ENCODE measurements at regions of chr20 and their contacts with region 1.

Region 1: DNA sequence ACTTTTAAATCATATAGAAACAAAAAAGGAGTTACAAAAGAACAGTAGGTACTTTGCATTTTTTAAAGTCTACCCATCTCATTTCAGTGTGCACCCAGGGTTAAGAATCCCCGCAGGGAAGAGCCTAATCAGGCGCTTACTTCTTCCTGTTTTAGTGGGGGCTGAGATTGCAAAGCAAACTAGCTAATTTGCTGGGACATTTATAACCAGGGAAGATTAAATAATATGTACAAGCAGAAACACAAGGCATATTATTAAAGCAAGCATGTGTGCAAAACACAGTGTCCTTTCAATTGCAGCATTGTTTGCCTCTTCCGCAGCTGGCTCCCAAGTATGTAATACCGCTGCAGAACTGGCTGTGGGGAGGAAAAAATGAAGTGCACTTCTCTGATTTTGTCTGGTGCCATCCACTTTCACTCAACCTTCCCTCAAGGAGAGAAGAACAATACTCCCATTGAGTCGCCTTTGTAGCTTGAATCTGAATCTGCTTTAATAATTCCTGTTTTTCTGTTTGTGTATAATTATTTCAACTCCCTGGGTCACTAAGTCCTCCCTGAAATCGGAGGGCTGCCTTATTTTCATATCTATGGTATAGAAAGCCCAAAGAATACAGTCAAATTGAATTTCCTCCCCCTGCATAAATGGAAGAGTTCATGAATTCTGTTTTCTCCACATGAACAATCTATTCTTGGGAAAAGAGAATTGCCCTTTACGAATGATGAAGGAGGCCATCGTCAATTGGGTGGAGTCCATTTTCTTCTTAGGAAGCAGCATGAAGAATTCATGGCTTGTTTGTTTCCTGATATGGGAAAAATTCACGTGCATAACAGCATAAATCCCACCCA is 23.3 kb upstream of the BCAS1 start:
- DNase-seq: no peak
- H3K4me3 ChIP-seq: no peak overlapping the region
- H3K27ac ChIP-seq: no peak overlapping the region
- H3K4me1 ChIP-seq: no peaks in the 10 kb centered on the region
- H3K27me3 ChIP-seq: no peaks in the 10 kb centered on the region
- CTCF ChIP-seq: no peak
- POLR2A ChIP-seq: no peak

Region 2: DNA sequence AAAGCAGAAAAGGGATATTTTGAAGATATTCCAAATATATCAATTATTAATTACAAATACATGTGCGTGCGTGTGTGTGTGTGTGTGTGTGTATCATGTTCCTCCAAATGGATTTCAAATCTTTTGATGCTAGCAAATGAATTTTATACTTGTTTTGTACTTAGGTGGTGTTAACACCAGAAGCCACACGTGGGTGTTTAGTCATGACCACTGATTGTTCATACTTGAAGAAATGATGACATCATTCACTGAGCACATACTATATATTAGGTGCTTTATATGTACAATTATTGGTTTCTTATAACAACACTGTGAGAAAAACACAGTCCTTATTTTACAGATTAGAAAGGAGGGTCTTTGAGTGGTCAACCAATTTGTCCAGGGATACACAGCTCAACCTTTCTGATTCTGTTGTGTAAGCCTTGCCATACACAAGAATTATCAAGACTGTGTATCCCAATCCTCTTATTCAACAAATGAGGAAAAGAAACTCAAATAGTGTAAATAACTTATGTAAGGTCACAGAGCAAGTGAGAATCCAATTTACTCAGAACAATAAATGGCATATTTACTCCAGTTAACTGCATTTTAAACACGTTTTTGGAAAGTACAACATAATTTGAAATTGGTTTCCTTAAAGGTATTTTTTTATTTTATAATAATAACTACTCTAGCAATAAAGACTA is 111.8 kb before region 1 on chr20:
- intact Hi-C with region 1: no loop called
- DNase-seq: no peak
- H3K4me3 ChIP-seq: no peak overlapping the region
- H3K27ac ChIP-seq: no peak overlapping the region
- H3K4me1 ChIP-seq: no peaks in the 10 kb centered on the region
- H3K27me3 ChIP-seq: no peaks in the 10 kb centered on the region
- CTCF ChIP-seq: no peak
- POLR2A ChIP-seq: no peak

Region 3: DNA sequence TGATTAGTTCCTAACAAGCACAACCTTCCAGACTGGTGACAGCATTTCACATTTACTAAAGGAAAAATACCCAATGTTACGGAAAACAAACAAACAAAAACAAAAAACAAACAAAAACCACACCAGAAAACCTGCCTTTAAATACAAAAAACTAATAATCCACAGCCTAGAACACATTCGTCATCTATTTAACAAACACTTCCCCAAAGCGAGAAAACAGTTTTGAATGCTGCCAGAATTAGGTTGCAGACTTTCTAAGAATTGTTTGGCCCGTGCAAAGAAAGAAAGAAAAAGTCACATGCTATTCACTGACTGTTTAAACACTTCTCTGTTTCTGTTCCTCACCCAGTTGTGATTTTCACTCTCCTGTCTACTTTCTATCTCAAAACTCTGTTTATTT is 75.8 kb before region 1 on chr20:
- intact Hi-C with region 1: no loop called
- DNase-seq: no peak
- H3K4me3 ChIP-seq: no peak overlapping the region
- H3K27ac ChIP-seq: no peak overlapping the region
- H3K4me1 ChIP-seq: no peaks in the 10 kb centered on the region
- H3K27me3 ChIP-seq: no peaks in the 10 kb centered on the region
- CTCF ChIP-seq: no peak
- POLR2A ChIP-seq: no peak

Region 4: GRCh38 chr20:54207743-54208547 is 114.3 kb after region 1 on chr20 and contains the start of gene PFDN4:
- intact Hi-C with region 1: loop called (anchors 10 kb)
- DNase-seq: peak; percentile 71 to 82
- H3K4me3 ChIP-seq: peak within 1 kb of the TSS; percentile 62 to 85
- H3K27ac ChIP-seq: peak within 1 kb of the TSS; percentile 93 to 97
- H3K4me1 ChIP-seq: no peaks in the 10 kb centered on the region
- H3K27me3 ChIP-seq: no peaks in the 10 kb centered on the region
- CTCF ChIP-seq: peak; percentile 67 to 89 (median 78)
- POLR2A ChIP-seq: peak in 1 of 2 donors; percentile 46
- total RNA-seq, gene PFDN4: 36.9 to 157 (median 124) TPM

Region 5: GRCh38 chr20:54246564-54246963 is 152.9 kb after region 1 on chr20:
- intact Hi-C with region 1: no loop called
- DNase-seq: no peak
- H3K4me3 ChIP-seq: no peak overlapping the region
- H3K27ac ChIP-seq: no peak overlapping the region
- H3K4me1 ChIP-seq: no peaks in the 10 kb centered on the region
- H3K27me3 ChIP-seq: no peaks in the 10 kb centered on the region
- CTCF ChIP-seq: no peak
- POLR2A ChIP-seq: no peak

Region 6: GRCh38 chr20:54649511-54649962 is 555.9 kb after region 1 on chr20:
- intact Hi-C with region 1: loop called (anchors 5 kb)
- DNase-seq: peak; percentile 50 to 67
- H3K4me3 ChIP-seq: no peak overlapping the region
- H3K27ac ChIP-seq: no peak overlapping the region
- H3K4me1 ChIP-seq: no peaks in the 10 kb centered on the region
- H3K27me3 ChIP-seq: no peaks in the 10 kb centered on the region
- CTCF ChIP-seq: peak; percentile 50 to 64 (median 58)
- POLR2A ChIP-seq: no peak

Measured in uterus (tissue), 4 donors.